Aorta (tissue), 5 donors: ENCODE measurements at regions of chr10 and their contacts with region 1.

Region 1: GRCh38 chr10:7687228-7687907 is 15.7 kb upstream of the ITIH2 start:
- DNase-seq: peak; percentile 87
- ATAC-seq: peak; percentile 89
- H3K4me3 ChIP-seq: no peak overlapping the region
- H3K27ac ChIP-seq: no peak overlapping the region
- H3K4me1 ChIP-seq: no peaks in the 10 kb centered on the region
- H3K27me3 ChIP-seq: no peaks in the 10 kb centered on the region

Region 2: GRCh38 chr10:7525314-7526016 is 161.9 kb before region 1 on chr10:
- intact Hi-C with region 1: loop called (anchors 2 kb)
- DNase-seq: no peak
- ATAC-seq: peak; percentile 78
- H3K4me3 ChIP-seq: no peak overlapping the region
- H3K27ac ChIP-seq: no peak overlapping the region
- H3K4me1 ChIP-seq: no peaks in the 10 kb centered on the region
- H3K27me3 ChIP-seq: no peaks in the 10 kb centered on the region

Region 3: GRCh38 chr10:7606951-7607404 is 80.4 kb before region 1 on chr10:
- intact Hi-C with region 1: loop called in 1 of 2 experiments (anchors 10 kb)
- DNase-seq: no peak
- ATAC-seq: no peak
- H3K4me3 ChIP-seq: no peak overlapping the region
- H3K27ac ChIP-seq: no peak overlapping the region
- H3K4me1 ChIP-seq: no peaks in the 10 kb centered on the region
- H3K27me3 ChIP-seq: peaks cover 0 to 1% of the 10 kb centered on the region in 2 donors